Aorta (tissue), 5 donors: ENCODE measurements at regions of chr9 and their contacts with region 1.

Region 1: DNA sequence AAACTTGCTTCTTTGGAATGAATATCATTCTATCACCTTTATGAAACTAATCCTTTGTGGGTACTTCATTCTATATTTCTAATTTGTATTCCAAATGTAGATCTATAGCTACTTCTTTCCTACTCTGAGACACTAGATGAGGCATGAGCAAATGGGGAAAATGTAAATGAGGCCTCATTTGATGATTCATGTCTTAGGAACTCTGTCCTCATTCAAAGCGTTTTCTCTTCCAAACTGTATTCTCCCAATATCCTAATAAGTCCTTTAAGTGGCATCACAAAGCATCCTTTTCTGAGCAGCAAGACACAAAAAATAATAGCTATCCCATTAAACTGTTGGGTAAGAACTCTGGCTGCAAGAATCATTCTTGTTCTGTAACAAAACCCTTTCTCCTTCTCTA is 56.1 kb downstream of the TTLL11 start:
- DNase-seq: no peak
- ATAC-seq: no peak
- H3K4me3 ChIP-seq: no peak overlapping the region
- H3K27ac ChIP-seq: no peak overlapping the region
- H3K4me1 ChIP-seq: peaks cover 2 to 8% of the 10 kb centered on the region in 2 donors
- H3K27me3 ChIP-seq: no peaks in the 10 kb centered on the region

Region 2: GRCh38 chr9:122075135-122076030 is 38.4 kb after region 1 on chr9:
- intact Hi-C with region 1: loop called (anchors 5 kb)
- DNase-seq: no peak
- ATAC-seq: peak; percentile 80
- H3K4me3 ChIP-seq: peak overlapping the region in 1 of 2 donors; percentile 6
- H3K27ac ChIP-seq: peak overlapping the region; percentile 100
- H3K4me1 ChIP-seq: peaks cover 0 to 7% of the 10 kb centered on the region in 2 donors
- H3K27me3 ChIP-seq: no peaks in the 10 kb centered on the region